GM12878 (cell line): ENCODE measurements at regions of chr18 and their contacts with region 1.

Region 1: DNA sequence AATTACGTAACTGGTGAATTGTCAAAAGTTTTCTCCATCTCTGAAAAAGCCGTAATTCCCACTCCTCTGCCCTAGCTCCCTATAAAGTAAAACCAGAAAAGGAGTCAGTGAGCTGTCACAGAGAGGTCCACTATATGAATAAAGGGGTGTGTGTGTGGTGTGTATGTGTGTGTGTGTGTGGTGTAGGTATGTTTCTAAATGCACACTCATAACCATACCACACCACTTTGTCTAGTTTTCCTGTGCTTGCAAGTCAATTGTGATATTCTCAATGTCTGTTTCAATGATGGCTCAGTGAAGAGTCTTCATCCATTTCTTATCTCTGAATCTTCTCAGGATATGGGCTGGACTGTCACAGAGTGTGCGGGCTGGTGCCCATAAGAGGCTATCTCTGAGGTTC is 54.8 kb upstream of the CCDC68 start:
- DNase-seq: no peak
- ATAC-seq: peak; percentile 61
- H3K4me3 ChIP-seq: no peak overlapping the region
- H3K27ac ChIP-seq: no peak overlapping the region
- H3K4me1 ChIP-seq: no peaks in the 10 kb centered on the region
- H3K27me3 ChIP-seq: no peaks in the 10 kb centered on the region
- CTCF ChIP-seq: no peak
- EP300 ChIP-seq: no peak
- POLR2A ChIP-seq: no peak
- RAD21 ChIP-seq: no peak

Region 2: GRCh38 chr18:55031979-55032378 is 17.9 kb after region 1 on chr18:
- CTCF ChIA-PET with region 1: interaction called, 5 read pairs
- POLR2A ChIA-PET with region 1: interaction called, 5 read pairs
- RAD21 ChIA-PET with region 1: no interaction called
- SMC1A ChIA-PET with region 1: interaction called, 22 read pairs
- in situ Hi-C with region 1: no loop called
- intact Hi-C with region 1: no loop called
- DNase-seq: no peak
- ATAC-seq: peak; percentile 65
- H3K4me3 ChIP-seq: no peak overlapping the region
- H3K27ac ChIP-seq: no peak overlapping the region
- H3K4me1 ChIP-seq: no peaks in the 10 kb centered on the region; the same call in 1 of the 2 replicates
- H3K27me3 ChIP-seq: no peaks in the 10 kb centered on the region; a peak in 1 of 4 replicates
- CTCF ChIP-seq: no peak
- EP300 ChIP-seq: no peak
- POLR2A ChIP-seq: no peak
- RAD21 ChIP-seq: no peak